K562 (cell line): ENCODE measurements at regions of chr3 and their contacts with region 1.

Region 1: DNA sequence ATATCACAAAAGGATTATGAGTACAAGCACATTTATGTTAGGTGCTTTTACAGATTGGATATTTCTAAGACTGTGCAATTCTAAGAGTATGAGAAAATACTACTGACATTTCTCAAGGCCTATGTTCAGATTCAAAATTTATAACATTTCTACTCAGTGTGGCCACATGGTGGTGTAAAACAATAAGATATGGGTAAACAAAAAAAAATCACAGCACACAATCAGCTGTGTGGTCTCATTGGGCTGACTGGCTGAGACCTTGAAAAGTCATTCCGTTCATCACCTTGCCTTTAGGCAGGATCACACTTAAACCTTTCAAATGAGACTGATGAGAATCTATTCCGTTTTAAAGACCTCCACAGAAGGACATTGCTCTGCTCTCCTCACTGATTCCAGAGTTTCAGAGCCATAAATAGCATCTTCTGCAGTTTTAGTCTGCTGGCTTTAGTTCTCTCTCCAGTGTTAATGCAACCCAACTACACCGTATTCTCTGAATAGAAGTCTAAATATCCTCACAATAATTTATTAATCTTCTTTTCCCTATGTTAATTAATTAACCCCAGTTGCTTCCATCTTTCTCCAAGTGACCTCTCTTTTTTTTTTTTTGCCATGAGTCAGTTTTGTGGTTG is 158.2 kb downstream of the SPATA16 start:
- DNase-seq: peak; percentile 22 to 49 (median 29)
- ATAC-seq: peak; percentile 68
- H3K4me3 ChIP-seq: no peak overlapping the region
- H3K27ac ChIP-seq: no peak overlapping the region
- H3K4me1 ChIP-seq: no peaks in the 10 kb centered on the region
- H3K27me3 ChIP-seq: no peaks in the 10 kb centered on the region
- CTCF ChIP-seq: peak; percentile 29 to 66 (median 42); a peak in 4 of 6 replicates
- EP300 ChIP-seq: no peak
- POLR2A ChIP-seq: no peak
- RAD21 ChIP-seq: peak; percentile 80 to 89

Region 2: GRCh38 chr3:172673210-172673679 is 309.6 kb before region 1 on chr3:
- CTCF ChIA-PET with region 1: no interaction called
- POLR2A ChIA-PET with region 1: no interaction called
- in situ Hi-C with region 1: no loop called
- intact Hi-C with region 1: loop called (anchors 2 kb)
- DNase-seq: peak; percentile 28 to 85 (median 50)
- ATAC-seq: peak; percentile 98
- H3K4me3 ChIP-seq: no peak overlapping the region
- H3K27ac ChIP-seq: no peak overlapping the region
- H3K4me1 ChIP-seq: no peaks in the 10 kb centered on the region
- H3K27me3 ChIP-seq: no peaks in the 10 kb centered on the region
- CTCF ChIP-seq: peak; percentile 81 to 85 (median 82)
- EP300 ChIP-seq: no peak
- POLR2A ChIP-seq: no peak
- RAD21 ChIP-seq: peak; percentile 67 to 82

Region 3: DNA sequence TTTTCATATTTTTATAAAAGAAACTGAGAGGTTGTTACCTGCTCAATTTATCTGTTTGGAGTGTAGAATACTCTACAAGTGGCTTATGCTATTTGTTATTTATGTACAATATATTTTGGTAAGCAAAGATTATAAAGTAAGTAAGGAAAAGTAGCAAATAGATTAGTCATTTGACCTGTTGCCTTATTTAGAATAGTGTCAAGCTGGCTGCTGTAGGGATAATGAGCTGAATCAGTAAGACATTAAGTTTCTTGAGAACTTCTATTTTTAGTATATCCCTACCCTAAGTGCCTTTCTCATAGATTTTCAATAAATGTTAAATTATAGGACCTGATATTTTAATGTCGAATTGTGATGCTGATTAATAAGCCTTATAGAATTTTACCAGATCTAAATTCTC is 195.1 kb before region 1 on chr3:
- CTCF ChIA-PET with region 1: no interaction called
- POLR2A ChIA-PET with region 1: no interaction called
- in situ Hi-C with region 1: no loop called
- intact Hi-C with region 1: no loop called
- DNase-seq: no peak
- ATAC-seq: no peak
- H3K4me3 ChIP-seq: no peak overlapping the region
- H3K27ac ChIP-seq: no peak overlapping the region
- H3K4me1 ChIP-seq: no peaks in the 10 kb centered on the region
- H3K27me3 ChIP-seq: no peaks in the 10 kb centered on the region
- CTCF ChIP-seq: no peak
- EP300 ChIP-seq: no peak
- POLR2A ChIP-seq: no peak
- RAD21 ChIP-seq: no peak

Region 4: DNA sequence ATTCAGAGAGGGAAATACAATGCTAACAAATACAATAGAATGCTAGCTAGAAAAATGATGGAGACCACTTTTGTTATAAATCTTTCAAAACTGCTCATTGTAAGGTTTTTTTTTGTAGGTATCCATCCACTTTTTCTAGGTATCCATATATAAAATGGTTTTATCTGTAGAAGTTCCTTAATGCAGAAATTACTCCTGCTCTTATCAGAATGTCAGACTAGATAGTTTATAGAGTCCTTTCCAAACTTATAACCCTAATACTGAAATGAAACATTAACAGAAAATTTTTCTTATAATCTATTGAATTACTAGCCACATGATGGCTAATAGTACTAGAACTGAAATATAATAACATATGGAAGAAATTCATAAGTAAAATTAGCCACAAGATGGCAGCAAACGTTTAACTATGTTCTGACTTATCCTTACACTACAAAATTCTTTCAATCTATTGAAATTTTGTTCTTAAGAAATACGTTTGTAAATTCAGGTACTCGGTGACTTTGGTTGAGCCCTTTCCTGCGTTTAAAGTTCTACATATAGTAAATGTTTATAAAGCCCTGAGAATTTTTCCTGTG is 173.8 kb before region 1 on chr3:
- CTCF ChIA-PET with region 1: interaction called, 3 read pairs
- POLR2A ChIA-PET with region 1: no interaction called
- in situ Hi-C with region 1: no loop called
- intact Hi-C with region 1: loop called (anchors 2 kb)
- DNase-seq: peak in 2 of 4 experiments; percentile 11 to 47
- ATAC-seq: peak; percentile 43; the same call in 2 of the 3 replicates
- H3K4me3 ChIP-seq: no peak overlapping the region
- H3K27ac ChIP-seq: no peak overlapping the region
- H3K4me1 ChIP-seq: no peaks in the 10 kb centered on the region
- H3K27me3 ChIP-seq: no peaks in the 10 kb centered on the region
- CTCF ChIP-seq: peak in 1 of 3 experiments; percentile 48; a peak in 3 of 6 replicates
- EP300 ChIP-seq: no peak
- POLR2A ChIP-seq: no peak
- RAD21 ChIP-seq: peak; percentile 60

Region 5: GRCh38 chr3:172836390-172836997 is 146.4 kb before region 1 on chr3:
- CTCF ChIA-PET with region 1: no interaction called
- POLR2A ChIA-PET with region 1: no interaction called
- in situ Hi-C with region 1: no loop called
- intact Hi-C with region 1: loop called (anchors 1 kb)
- DNase-seq: peak; percentile 23 to 76 (median 30)
- ATAC-seq: peak; percentile 89
- H3K4me3 ChIP-seq: no peak overlapping the region
- H3K27ac ChIP-seq: no peak overlapping the region
- H3K4me1 ChIP-seq: peaks cover 0 to 4% of the 10 kb centered on the region in 2 experiments; a peak in 1 of 5 replicates
- H3K27me3 ChIP-seq: no peaks in the 10 kb centered on the region
- CTCF ChIP-seq: peak; percentile 37 to 73 (median 65); a peak in 5 of 6 replicates
- EP300 ChIP-seq: no peak
- POLR2A ChIP-seq: no peak
- RAD21 ChIP-seq: peak; percentile 76 to 89

Region 6: GRCh38 chr3:173045770-173046382 is 63.0 kb after region 1 on chr3:
- CTCF ChIA-PET with region 1: interaction called, 11 read pairs
- POLR2A ChIA-PET with region 1: no interaction called
- in situ Hi-C with region 1: loop called (anchors 10 kb)
- intact Hi-C with region 1: loop called (anchors 1 kb)
- DNase-seq: peak in 1 of 4 experiments; percentile 26
- ATAC-seq: no peak
- H3K4me3 ChIP-seq: no peak overlapping the region
- H3K27ac ChIP-seq: no peak overlapping the region
- H3K4me1 ChIP-seq: no peaks in the 10 kb centered on the region
- H3K27me3 ChIP-seq: no peaks in the 10 kb centered on the region
- CTCF ChIP-seq: peak in 1 of 3 experiments; percentile 52; a peak in 3 of 6 replicates
- EP300 ChIP-seq: no peak
- POLR2A ChIP-seq: no peak
- RAD21 ChIP-seq: peak; percentile 68 to 80

Region 7: GRCh38 chr3:173058931-173059330 is 76.1 kb after region 1 on chr3:
- CTCF ChIA-PET with region 1: no interaction called
- POLR2A ChIA-PET with region 1: no interaction called
- in situ Hi-C with region 1: no loop called
- intact Hi-C with region 1: no loop called
- DNase-seq: no peak
- ATAC-seq: no peak
- H3K4me3 ChIP-seq: no peak overlapping the region
- H3K27ac ChIP-seq: no peak overlapping the region
- H3K4me1 ChIP-seq: no peaks in the 10 kb centered on the region
- H3K27me3 ChIP-seq: no peaks in the 10 kb centered on the region
- CTCF ChIP-seq: no peak
- EP300 ChIP-seq: no peak
- POLR2A ChIP-seq: no peak
- RAD21 ChIP-seq: no peak

Region 8: DNA sequence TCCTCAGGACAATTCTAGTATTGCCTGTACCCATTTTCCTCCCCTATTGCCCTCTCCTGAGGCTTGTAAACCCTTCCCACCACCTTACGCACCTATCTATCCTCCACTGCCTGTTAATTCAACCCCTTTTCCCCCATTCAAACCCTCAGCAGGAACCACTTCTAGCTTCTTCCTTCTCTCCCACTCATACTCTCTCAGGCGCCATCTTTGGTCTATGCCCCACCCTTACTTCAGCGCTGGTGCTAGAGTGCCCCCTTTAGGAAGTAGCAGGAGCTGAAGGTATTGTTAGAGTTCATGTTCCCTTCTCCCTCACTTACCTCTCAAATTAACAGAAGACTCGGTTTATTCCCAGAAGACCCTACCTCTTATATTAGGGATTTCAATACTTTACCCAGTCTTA is 292.9 kb after region 1 on chr3:
- CTCF ChIA-PET with region 1: no interaction called
- POLR2A ChIA-PET with region 1: no interaction called
- in situ Hi-C with region 1: loop called (anchors 10 kb)
- intact Hi-C with region 1: loop called (anchors 1 kb)
- DNase-seq: peak; percentile 41 to 51 (median 45)
- ATAC-seq: peak; percentile 95
- H3K4me3 ChIP-seq: no peak overlapping the region
- H3K27ac ChIP-seq: no peak overlapping the region
- H3K4me1 ChIP-seq: no peaks in the 10 kb centered on the region
- H3K27me3 ChIP-seq: no peaks in the 10 kb centered on the region
- CTCF ChIP-seq: peak; percentile 53 to 58 (median 54); a peak in 5 of 6 replicates
- EP300 ChIP-seq: no peak
- POLR2A ChIP-seq: no peak
- RAD21 ChIP-seq: peak; percentile 75

Region 9: GRCh38 chr3:173865900-173866496 is 883.1 kb after region 1 on chr3:
- CTCF ChIA-PET with region 1: no interaction called
- POLR2A ChIA-PET with region 1: no interaction called
- in situ Hi-C with region 1: no loop called
- intact Hi-C with region 1: loop called (anchors 10 kb)
- DNase-seq: no peak
- ATAC-seq: no peak
- H3K4me3 ChIP-seq: no peak overlapping the region
- H3K27ac ChIP-seq: no peak overlapping the region
- H3K4me1 ChIP-seq: no peaks in the 10 kb centered on the region
- H3K27me3 ChIP-seq: no peaks in the 10 kb centered on the region
- CTCF ChIP-seq: no peak
- EP300 ChIP-seq: no peak
- POLR2A ChIP-seq: no peak
- RAD21 ChIP-seq: no peak